Activated B cell treated with CpG ODN at 0.5 μM for 24 hours (primary cell): ENCODE measurements at regions of chr2 and their contacts with region 1.

Region 1: DNA sequence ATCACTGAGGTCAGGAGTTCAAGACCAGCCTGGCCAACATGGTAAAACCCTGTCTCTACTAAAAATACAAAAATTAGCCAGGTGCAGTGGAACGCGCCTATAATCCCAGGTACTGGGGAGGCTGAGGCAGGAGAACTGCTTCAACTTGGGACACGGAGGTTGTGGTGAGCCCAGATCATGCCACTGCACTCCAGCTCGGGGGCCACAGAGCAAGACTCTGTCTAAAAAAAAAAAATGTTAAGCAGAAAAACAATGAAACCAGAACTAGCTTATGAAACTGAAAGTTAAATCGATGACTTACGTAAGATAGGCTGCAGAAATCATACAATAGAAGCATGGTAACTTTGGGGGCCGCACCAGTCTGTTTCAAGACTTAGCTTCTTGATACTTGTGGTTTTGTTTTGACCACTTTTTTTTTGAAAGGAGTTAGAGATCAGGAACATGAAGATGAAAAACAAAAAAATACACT is 6.2 kb upstream of the GPR155 start:
- DNase-seq: peak; percentile 29
- ATAC-seq: peak; percentile 93
- H3K4me3 Mint-ChIP-seq: peak overlapping the region; percentile 73
- H3K27ac Mint-ChIP-seq: peak overlapping the region; percentile 97
- H3K4me1 Mint-ChIP-seq: peaks cover 48% of the 10 kb centered on the region
- H3K27me3 Mint-ChIP-seq: no peaks in the 10 kb centered on the region
- CTCF ChIP-seq: no peak

Region 2: GRCh38 chr2:172938713-172939375 is 1554.2 kb before region 1 on chr2:
- CTCF ChIA-PET with region 1: no interaction called
- POLR2A ChIA-PET with region 1: no interaction called
- intact Hi-C with region 1: no loop called
- DNase-seq: no peak
- ATAC-seq: no peak
- H3K4me3 Mint-ChIP-seq: no peak overlapping the region
- H3K27ac Mint-ChIP-seq: no peak overlapping the region
- H3K4me1 Mint-ChIP-seq: no peaks in the 10 kb centered on the region
- H3K27me3 Mint-ChIP-seq: peaks cover 12% of the 10 kb centered on the region
- CTCF ChIP-seq: no peak

Region 3: GRCh38 chr2:174516501-174517378 is 23.7 kb after region 1 on chr2:
- CTCF ChIA-PET with region 1: no interaction called
- POLR2A ChIA-PET with region 1: interaction called, 6 read pairs
- intact Hi-C with region 1: loop called (anchors 2 kb)
- DNase-seq: no peak
- ATAC-seq: peak; percentile 57
- H3K4me3 Mint-ChIP-seq: peak overlapping the region; percentile 3
- H3K27ac Mint-ChIP-seq: peak overlapping the region; percentile 10
- H3K4me1 Mint-ChIP-seq: peaks cover 16% of the 10 kb centered on the region
- H3K27me3 Mint-ChIP-seq: peaks cover 6% of the 10 kb centered on the region
- CTCF ChIP-seq: no peak

Region 4: GRCh38 chr2:174536304-174536703 is 43.3 kb after region 1 on chr2:
- CTCF ChIA-PET with region 1: no interaction called
- POLR2A ChIA-PET with region 1: no interaction called
- intact Hi-C with region 1: no loop called
- DNase-seq: no peak
- ATAC-seq: no peak
- H3K4me3 Mint-ChIP-seq: no peak overlapping the region
- H3K27ac Mint-ChIP-seq: no peak overlapping the region
- H3K4me1 Mint-ChIP-seq: no peaks in the 10 kb centered on the region
- H3K27me3 Mint-ChIP-seq: peaks cover 7% of the 10 kb centered on the region
- CTCF ChIP-seq: no peak